Right ventricle myocardium superior (tissue), 1 donor: ENCODE measurements at regions of chr1 and their contacts with region 1.

Region 1: DNA sequence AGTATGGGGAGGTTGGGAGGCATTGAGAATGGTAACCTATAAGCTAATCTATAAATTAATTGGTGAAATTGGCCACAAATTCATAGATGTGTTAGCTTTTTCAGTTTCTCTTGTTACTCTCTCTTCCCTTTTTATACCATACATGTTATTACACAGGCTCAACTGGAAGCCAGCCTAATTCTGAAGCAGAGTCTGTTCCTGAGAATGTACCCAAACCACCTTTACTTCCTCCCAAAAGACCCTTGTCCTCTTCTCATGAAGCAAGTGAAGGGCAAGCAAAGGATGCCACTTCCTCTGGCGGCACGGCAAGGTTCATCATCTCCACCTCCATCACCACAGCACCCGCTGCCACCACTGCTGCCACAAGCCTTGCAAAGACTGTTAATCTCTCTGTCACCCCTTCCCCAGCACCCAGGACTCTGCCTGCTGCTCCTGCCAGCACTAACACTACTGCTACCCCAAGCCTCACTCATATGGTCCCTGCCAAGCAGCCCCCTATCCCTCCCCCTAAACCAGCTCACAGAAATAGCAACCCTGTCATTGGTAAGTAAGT is 39.5 kb upstream of the RCC1 start:
- DNase-seq: no peak
- ATAC-seq: no peak

Region 2: DNA sequence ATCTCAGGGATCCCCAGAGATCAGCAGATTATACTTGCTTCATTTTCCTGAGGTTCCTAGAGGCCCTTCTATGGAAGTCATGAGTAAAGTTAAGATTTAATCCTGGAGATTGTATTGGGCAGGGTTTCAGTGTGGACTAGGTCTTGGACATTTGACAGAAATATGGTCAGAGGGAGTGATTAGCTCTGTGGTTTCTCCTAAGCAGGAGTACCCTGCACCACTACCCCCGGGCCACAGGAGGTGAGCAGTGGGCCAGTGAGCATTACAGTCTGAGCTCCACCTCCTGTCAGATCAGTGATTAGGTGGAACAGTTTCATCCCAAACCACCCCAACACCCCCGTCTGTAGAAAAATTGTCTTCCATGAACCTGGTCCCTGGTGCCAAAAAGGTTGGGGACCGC is 53.6 kb before region 1 on chr1:
- intact Hi-C with region 1: loop called (anchors 5 kb)
- DNase-seq: no peak
- ATAC-seq: no peak